Right ventricle myocardium inferior (tissue), 1 donor: ENCODE measurements at regions of chr11 and their contacts with region 1.

Region 1: DNA sequence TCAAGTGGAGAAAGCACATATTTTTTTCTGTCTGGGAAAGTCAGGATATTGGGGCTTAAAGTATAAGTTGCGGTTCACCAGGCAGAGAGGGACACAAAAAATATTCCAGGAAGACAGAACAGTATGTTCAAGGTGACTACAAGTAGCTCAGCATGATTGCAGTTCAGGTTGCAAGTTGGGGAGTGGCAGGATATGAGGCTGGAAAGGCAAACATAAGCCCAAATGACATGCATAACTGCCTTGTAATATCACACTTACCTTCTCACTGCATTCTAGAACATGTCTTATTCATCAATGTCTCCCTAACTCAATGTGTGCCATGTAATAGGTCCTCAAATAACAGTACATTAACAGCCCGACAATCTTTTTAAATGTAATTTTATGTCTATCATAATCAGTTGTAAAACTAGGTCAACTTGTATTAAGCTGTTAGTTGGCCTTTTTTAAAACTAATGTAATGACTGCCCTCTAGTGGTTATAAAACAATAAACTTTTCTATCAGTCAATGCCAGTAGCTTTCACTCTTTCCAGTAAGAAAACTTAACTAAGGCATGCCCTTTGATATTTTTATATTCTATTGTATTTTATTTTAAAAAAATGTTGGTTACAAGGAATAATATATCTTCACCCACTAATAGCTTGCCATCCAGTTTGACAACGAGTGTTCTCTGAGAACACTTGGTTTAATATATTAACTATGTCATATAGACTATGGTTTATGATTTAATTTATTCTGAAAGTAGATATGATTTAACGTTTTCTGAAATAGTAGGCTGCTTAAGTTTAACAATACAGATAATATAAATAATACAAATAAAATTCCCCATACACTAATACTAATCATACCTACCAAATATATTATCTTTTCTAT is 39.4 kb upstream of the CFAP300 start:
- DNase-seq: no peak
- ATAC-seq: no peak

Region 2: GRCh38 chr11:101180481-101180880 is 827.3 kb before region 1 on chr11:
- intact Hi-C with region 1: no loop called
- DNase-seq: no peak
- ATAC-seq: no peak

Region 3: GRCh38 chr11:101456812-101457211 is 551.0 kb before region 1 on chr11:
- intact Hi-C with region 1: loop called (anchors 10 kb)
- DNase-seq: no peak
- ATAC-seq: no peak

Region 4: GRCh38 chr11:101860696-101861427 is 146.9 kb before region 1 on chr11:
- intact Hi-C with region 1: loop called (anchors 1 kb)
- DNase-seq: no peak
- ATAC-seq: peak; percentile 91

Region 5: GRCh38 chr11:102135256-102135655 is 127.5 kb after region 1 on chr11:
- intact Hi-C with region 1: no loop called
- DNase-seq: no peak
- ATAC-seq: no peak

Region 6: DNA sequence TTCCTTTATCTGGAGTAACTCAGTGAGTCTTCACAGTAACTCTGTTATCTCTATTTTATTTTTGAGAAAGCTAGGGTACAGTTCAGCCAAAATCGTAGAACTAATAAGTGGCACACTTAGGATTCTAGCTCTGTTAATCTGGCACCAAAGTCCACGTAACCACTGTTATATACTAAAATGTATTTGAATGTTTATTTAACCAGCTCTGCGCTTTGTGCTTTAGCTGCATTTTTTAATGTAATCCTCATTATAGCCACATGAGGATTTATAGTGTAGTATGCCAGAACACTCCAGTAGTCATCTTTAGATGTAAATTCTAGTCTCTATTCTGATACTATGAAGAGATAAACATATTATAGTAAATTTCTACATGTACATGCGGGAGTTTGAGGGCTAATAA is 139.2 kb after region 1 on chr11:
- intact Hi-C with region 1: no loop called
- DNase-seq: no peak
- ATAC-seq: no peak

Region 7: DNA sequence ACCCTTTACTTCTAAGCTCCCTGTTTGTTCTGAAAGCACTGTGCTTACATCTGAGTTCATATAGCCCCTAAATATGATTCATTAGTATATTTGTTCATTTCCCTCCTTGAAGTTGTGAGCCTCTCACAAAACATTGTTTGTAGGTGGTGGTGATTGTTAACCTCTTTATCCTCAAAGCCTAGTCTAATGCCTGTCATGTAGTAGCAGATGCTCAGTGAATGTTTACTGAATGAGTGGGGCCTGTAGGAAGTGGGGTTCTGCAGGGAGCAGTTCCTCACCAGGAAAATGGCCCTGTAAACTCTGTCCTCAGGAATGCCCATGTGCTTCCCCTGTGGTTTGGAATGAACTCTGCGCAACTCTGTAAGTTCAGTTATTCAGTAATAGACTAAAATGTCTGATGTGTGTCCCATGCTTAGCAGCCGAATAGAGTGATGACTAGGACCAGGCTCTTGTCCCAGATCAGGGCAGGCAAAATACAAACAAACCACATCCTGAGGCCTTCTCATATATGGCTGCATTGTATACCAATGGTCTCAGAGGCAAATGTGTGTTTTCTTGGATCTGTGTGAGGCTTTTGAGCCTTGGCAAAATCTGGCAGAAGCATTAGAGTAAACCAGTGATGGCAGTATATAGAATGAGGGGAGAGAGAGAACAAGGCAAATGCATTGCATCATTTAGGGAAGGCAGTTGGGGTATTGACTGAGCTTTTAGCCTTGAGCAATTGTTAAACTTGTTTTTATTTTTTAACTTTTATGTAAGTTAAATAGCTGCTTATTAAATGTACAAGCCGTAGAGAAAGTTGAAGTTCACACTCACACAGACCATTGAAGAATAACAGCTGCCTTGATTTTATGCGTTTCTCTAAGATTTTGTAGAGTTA is 218.1 kb after region 1 on chr11:
- intact Hi-C with region 1: no loop called
- DNase-seq: no peak
- ATAC-seq: no peak